ENCODE measurements at regions of chr7 and their contacts with region 1.

Region 1: DNA sequence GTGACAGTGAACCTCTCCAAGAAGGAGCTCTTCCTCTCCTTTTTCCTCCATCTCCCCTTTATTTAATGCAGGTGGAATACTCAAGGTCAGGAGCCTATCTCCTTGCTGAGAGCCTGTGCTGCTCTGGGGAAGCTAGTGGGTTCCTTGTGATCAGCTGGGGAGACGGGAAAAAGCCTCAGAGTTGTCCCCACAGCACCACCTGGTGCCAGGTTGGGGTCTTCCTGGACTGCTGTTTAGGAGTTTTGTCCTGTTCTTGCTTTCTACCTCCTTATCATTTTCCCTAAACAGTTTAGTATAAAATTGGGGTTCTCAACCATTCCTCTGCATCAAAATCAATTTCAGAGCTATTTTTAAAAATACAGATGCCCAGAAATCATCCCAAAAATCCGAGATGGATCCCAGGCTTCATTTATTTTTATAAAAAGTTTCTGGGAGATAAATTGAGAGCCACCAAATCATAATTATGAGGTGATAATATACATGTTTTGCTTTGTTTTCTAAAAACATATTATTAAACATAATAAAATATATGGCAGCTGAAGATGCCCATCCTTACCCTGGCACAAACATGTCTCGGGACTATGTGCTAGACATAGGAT is 44.3 kb downstream of the MACC1 start:
- ATAC-seq: peak; percentile 80 to 100 (median 92)
- H3K4me3 ChIP-seq: no peak overlapping the region
- H3K27ac ChIP-seq: no peak overlapping the region
- H3K4me1 ChIP-seq: no peaks in the 10 kb centered on the region

Region 2: DNA sequence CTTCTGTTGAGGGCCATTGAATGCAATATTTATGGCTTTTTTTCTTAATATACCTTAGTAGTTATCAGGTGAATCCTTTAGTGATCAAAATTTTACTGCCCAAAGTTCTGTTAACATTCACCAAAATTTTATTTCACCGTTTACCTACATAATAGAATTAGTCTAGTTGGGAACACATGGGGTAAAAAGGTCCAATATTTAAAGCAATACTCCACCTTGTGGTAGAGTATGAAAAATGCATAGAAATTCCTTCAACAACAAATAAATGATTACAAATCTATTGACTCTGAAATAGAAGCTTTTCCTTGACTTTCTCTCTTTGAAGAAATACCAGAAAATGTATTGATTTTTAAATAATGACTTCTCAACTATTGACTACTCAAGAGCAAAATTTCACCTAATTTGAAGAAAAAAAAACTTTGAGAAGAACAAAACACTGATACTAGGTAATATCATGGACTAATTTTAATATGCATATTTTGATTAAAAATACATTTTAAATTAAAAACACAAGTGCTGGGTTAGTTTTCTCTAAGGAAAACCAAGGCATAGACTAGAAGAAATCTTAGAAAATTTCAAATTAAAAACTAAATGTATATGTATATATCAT is 507.3 kb before region 1 on chr7:
- in situ Hi-C with region 1: no loop called
- ATAC-seq: peak in 2 of 8 experiments; percentile 33 to 36
- H3K4me3 ChIP-seq: no peak overlapping the region
- H3K27ac ChIP-seq: no peak overlapping the region
- H3K4me1 ChIP-seq: no peaks in the 10 kb centered on the region

Region 3: DNA sequence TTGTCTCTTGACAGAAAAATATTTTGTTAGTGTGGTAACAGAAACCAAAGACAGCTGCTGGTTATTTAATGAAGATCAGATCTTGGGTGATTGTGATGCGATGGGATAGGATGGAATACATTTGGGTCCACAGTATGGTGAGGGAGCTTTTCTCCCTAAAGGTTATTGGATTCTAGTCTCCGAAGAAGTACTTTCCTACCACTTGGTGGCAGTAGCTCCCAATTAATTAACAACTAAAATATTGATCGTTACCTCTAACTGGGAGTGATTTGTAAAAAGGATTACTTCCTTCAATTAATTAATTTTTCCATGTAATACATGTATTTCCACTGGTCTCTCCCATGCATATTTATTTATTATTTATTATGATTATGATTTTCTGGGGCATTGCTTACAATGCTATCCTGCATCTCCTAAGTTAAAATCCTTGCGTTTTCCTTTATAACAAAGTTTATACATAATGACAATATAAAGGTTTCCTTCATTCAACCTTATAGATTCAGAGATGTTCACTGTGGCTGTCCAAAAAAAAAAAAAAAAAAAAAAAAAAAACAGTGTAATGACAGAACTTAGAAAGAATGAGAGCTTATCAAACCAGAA is 425.0 kb before region 1 on chr7:
- in situ Hi-C with region 1: loop called in 7 of 9 experiments (anchors 10 to 25 kb)
- ATAC-seq: peak in 6 of 8 experiments; percentile 22 to 49 (median 32)
- H3K4me3 ChIP-seq: no peak overlapping the region
- H3K27ac ChIP-seq: no peak overlapping the region
- H3K4me1 ChIP-seq: peaks cover 2 to 10% of the 10 kb centered on the region in 2 donors

Region 4: GRCh38 chr7:19754521-19755116 is 418.2 kb before region 1 on chr7:
- in situ Hi-C with region 1: loop called in 7 of 9 experiments (anchors 10 to 25 kb)
- ATAC-seq: no peak
- H3K4me3 ChIP-seq: no peak overlapping the region
- H3K27ac ChIP-seq: no peak overlapping the region
- H3K4me1 ChIP-seq: peaks cover 2 to 8% of the 10 kb centered on the region in 2 donors

Region 5: GRCh38 chr7:19982841-19983835 is 189.7 kb before region 1 on chr7:
- in situ Hi-C with region 1: loop called in 3 of 9 experiments (anchors 10 to 25 kb)
- ATAC-seq: peak in 3 of 8 experiments; percentile 88 to 96 (median 95)
- H3K4me3 ChIP-seq: no peak overlapping the region
- H3K27ac ChIP-seq: no peak overlapping the region
- H3K4me1 ChIP-seq: no peaks in the 10 kb centered on the region